Dendritic cell treated with granulocyte-macrophage colony-stimulating factor and Interleukin-4, amounts not matched to agents 40 ng/mL and 50 ng/mL, for 4 days (primary cell): ENCODE measurements at regions of chr6 and their contacts with region 1.

Region 1: GRCh38 chr6:33585403-33586107 is 5.5 kb upstream of the BAK1 start:
- H3K4me3 Mint-ChIP-seq: peak overlapping the region; percentile 27
- H3K27ac Mint-ChIP-seq: peak overlapping the region; percentile 69
- H3K4me1 Mint-ChIP-seq: peaks cover 19% of the 10 kb centered on the region
- H3K27me3 Mint-ChIP-seq: peaks cover 3% of the 10 kb centered on the region

Region 2: DNA sequence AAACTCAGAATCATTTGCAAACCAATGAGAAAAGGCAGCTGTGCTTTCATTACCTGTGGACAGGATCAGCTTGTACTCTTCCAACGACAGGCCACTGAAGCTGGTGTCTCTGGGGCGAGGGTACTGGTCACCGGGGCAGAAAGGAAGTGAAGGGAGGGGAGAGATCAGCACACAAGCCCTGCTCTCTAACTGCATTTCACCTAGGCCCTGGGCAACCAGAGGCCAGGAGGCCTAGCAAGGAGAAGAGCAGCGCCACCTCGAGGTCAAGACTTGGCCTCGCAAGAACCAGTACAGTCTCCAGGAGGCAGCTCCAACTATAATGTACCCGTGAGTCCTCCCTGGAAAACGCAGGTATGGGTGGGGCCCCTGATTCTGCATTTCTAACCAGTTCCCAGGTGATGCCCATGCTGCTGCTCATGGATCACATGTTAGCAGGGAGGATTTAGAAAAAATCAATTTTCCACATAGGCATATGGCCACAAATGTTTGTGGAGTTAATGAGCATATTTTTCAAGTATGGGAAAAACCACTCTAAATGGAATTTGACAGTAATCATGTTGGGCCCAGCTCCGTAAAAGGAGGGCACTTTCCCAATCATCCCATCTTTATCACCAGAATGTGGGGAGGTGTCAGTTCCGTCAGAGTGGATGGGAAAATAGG is 115.0 kb after region 1 on chr6:
- intact Hi-C with region 1: loop called (anchors 2 kb)
- H3K4me3 Mint-ChIP-seq: no peak overlapping the region
- H3K27ac Mint-ChIP-seq: no peak overlapping the region
- H3K4me1 Mint-ChIP-seq: peaks cover 6% of the 10 kb centered on the region
- H3K27me3 Mint-ChIP-seq: no peaks in the 10 kb centered on the region

Region 3: GRCh38 chr6:33761922-33762629 is 176.5 kb after region 1 on chr6:
- intact Hi-C with region 1: loop called (anchors 5 kb)
- H3K4me3 Mint-ChIP-seq: no peak overlapping the region
- H3K27ac Mint-ChIP-seq: no peak overlapping the region
- H3K4me1 Mint-ChIP-seq: no peaks in the 10 kb centered on the region
- H3K27me3 Mint-ChIP-seq: peaks cover 5% of the 10 kb centered on the region